Keratinocyte (primary cell): ENCODE measurements at regions of chr4 and their contacts with region 1.

Region 1: DNA sequence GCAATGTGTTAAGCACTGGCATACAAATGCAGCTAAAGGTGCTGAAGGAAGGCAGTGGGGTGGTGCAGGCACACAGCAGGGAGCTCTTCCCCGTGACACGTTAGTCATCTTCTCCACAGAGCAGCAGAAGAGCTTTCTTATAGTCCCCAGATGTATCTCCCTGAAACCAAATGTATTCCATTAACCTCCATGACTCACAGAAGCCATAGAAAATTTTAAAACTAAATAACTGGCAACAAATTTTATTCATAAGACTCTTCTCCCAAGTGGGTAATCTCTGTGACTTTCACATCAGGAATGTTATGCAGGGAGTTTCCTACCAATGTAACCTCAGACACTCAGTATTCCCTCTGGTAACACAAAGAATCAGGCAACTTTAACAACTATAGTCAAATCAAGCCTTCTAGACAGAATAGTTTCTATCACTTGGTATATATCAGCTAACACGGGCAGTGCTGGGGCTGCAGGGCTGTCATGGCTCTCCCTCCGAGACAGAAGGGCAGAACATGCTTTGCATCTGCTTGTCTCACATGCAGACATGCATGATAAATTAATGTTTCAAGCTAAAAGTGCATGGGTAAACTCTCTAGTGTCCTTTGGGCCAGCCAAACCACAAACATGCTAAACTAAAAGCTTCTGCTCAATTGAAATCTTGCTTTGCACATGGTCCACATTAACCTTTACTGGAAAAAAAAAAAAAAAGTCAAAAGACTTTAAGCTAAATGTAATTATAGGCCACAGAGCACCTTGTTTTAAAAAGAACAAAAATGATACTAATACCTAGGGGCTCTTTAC is 28.2 kb downstream of the ANXA5 start:
- DNase-seq: no peak
- H3K4me3 ChIP-seq: no peak overlapping the region
- H3K27ac ChIP-seq: peak overlapping the region; percentile 57
- H3K4me1 ChIP-seq: peaks cover 4% of the 10 kb centered on the region
- H3K27me3 ChIP-seq: no peaks in the 10 kb centered on the region
- CTCF ChIP-seq: no peak

Region 2: DNA sequence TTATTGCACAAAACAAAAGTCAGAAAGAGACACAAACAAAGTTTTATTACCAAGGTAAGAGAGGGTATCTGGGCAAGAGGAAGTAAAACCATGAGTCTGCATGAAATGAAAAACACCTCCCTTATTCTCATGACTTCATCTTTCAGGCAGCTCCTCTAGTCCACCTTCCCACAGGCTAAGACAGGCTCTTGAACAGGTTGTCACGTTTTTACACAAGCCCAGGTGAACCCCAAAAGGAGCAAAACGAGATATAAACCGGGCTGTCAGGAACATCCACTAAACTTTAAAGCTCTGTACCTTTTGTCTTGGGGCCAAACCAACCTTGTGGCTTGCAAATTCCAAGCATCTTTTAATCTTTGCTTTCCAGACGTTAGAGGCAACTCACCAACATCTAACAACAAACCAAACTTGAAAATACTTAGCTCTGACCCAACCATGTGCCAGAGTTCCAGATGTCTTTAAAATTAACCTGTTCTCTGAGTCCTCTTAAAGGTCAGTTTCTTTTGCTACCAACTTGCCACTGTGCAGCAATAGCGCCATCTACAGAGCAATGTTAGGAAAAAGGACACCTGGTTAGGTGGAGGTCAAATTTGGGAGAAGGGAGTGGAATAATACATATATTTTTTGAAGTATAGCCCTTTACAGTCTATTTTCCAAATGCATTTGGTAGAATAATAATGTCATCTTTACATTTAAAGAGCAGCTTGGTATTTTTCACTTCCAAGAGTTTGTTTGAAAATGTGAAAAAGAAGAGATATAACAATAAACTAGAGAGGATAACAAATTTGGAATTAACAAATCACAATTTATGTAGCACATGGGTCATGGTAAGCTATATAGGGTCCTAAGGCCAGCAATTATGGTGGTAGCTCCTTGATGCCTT is 360.9 kb before region 1 on chr4:
- dilution Hi-C with region 1: no loop called
- DNase-seq: peak; percentile 25
- H3K4me3 ChIP-seq: no peak overlapping the region
- H3K27ac ChIP-seq: peak overlapping the region; percentile 52
- H3K4me1 ChIP-seq: peaks cover 14% of the 10 kb centered on the region
- H3K27me3 ChIP-seq: no peaks in the 10 kb centered on the region
- CTCF ChIP-seq: peak; percentile 66 to 70 (median 67)

Region 3: GRCh38 chr4:121736735-121737351 is 68.3 kb after region 1 on chr4:
- dilution Hi-C with region 1: loop called (anchors 10 kb)
- DNase-seq: no peak
- H3K4me3 ChIP-seq: no peak overlapping the region
- H3K27ac ChIP-seq: no peak overlapping the region
- H3K4me1 ChIP-seq: no peaks in the 10 kb centered on the region
- H3K27me3 ChIP-seq: no peaks in the 10 kb centered on the region
- CTCF ChIP-seq: peak; percentile 49 to 68 (median 59)